GM10248 (cell line): ENCODE measurements at regions of chr1 and their contacts with region 1.

Region 1: GRCh38 chr1:89274411-89274857 is 1.8 kb upstream of the GBP5 start:
- DNase-seq: no peak
- CTCF ChIP-seq: no peak

Region 2: GRCh38 chr1:89260566-89261275 is 13.7 kb before region 1 on chr1:
- CTCF ChIA-PET with region 1: interaction called, 12 read pairs
- POLR2A ChIA-PET with region 1: no interaction called
- DNase-seq: no peak
- CTCF ChIP-seq: no peak

Region 3: GRCh38 chr1:89331890-89332289 is 57.5 kb after region 1 on chr1:
- CTCF ChIA-PET with region 1: no interaction called
- POLR2A ChIA-PET with region 1: no interaction called
- DNase-seq: no peak
- CTCF ChIP-seq: no peak

Region 4: DNA sequence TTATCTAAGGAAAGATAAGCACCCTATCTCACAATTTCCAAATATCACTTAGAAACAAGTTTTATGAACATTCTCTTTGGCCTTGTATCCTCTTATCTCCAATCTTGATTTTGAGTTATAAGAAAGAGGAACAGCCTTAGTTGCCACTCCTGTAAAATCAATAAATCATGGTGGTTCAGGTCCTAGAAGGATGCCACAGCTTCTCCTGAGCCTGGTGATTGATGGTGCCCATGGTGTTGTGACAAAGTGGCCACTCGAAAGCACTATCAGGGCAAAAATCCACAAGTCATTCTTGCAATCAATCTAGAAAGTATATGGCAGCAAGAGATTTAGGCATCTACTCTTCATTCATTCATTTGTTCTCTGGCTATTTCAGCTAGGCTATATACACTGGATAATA is 117.3 kb after region 1 on chr1:
- CTCF ChIA-PET with region 1: no interaction called
- POLR2A ChIA-PET with region 1: no interaction called
- DNase-seq: no peak
- CTCF ChIP-seq: no peak

Region 5: GRCh38 chr1:90809996-90810395 is 1535.6 kb after region 1 on chr1:
- CTCF ChIA-PET with region 1: no interaction called
- POLR2A ChIA-PET with region 1: no interaction called
- DNase-seq: no peak
- CTCF ChIP-seq: no peak